ENCODE measurements at regions of chr18 and their contacts with region 1.

Region 1: GRCh38 chr18:46481048-46481846 is 175.8 kb downstream of the LOXHD1 start:
- DNase-seq: peak in 1 of 2 experiments; percentile 52
- H3K4me3 ChIP-seq: no peak overlapping the region
- H3K4me3 Mint-ChIP-seq: no peak overlapping the region
- H3K27ac Mint-ChIP-seq: no peak overlapping the region
- H3K4me1 ChIP-seq: no peaks in the 10 kb centered on the region
- H3K4me1 Mint-ChIP-seq: no peaks in the 10 kb centered on the region
- H3K27me3 ChIP-seq: no peaks in the 10 kb centered on the region
- H3K27me3 Mint-ChIP-seq: peaks cover 9% of the 10 kb centered on the region
- CTCF ChIP-seq: peak; percentile 51 to 53

Region 2: DNA sequence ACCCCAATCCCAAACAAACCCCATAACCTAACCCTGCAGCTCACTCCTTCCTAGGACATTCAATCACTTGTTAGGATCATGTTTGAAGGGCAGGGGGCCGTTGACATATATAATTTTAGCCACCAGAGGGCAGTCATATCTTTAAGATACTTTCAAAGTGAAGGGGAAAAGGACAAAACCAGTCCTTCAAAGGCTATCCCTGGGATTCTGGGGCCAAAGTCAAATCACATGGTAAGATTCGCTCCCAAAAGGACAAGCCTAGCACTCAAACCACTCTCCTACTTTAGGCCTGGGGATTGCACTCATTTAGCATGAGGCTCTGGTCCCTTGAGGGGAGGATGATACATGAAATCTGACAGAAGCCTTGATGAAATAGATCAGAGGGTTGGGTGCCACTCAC is 332.4 kb before region 1 on chr18:
- CTCF ChIA-PET with region 1: no interaction called
- POLR2A ChIA-PET with region 1: no interaction called
- intact Hi-C with region 1: loop called (anchors 5 kb)
- DNase-seq: peak; percentile 35 to 58
- H3K4me3 ChIP-seq: no peak overlapping the region
- H3K4me3 Mint-ChIP-seq: no peak overlapping the region
- H3K27ac Mint-ChIP-seq: no peak overlapping the region
- H3K4me1 ChIP-seq: no peaks in the 10 kb centered on the region
- H3K4me1 Mint-ChIP-seq: peaks cover 5% of the 10 kb centered on the region
- H3K27me3 ChIP-seq: no peaks in the 10 kb centered on the region
- H3K27me3 Mint-ChIP-seq: no peaks in the 10 kb centered on the region
- CTCF ChIP-seq: peak; percentile 28 to 33

Region 3: GRCh38 chr18:46281185-46282176 is 199.8 kb before region 1 on chr18:
- CTCF ChIA-PET with region 1: no interaction called
- POLR2A ChIA-PET with region 1: no interaction called
- intact Hi-C with region 1: loop called (anchors 1 kb)
- DNase-seq: peak; percentile 43 to 56
- H3K4me3 ChIP-seq: no peak overlapping the region
- H3K4me3 Mint-ChIP-seq: no peak overlapping the region
- H3K27ac Mint-ChIP-seq: no peak overlapping the region
- H3K4me1 ChIP-seq: no peaks in the 10 kb centered on the region
- H3K4me1 Mint-ChIP-seq: no peaks in the 10 kb centered on the region
- H3K27me3 ChIP-seq: no peaks in the 10 kb centered on the region
- H3K27me3 Mint-ChIP-seq: no peaks in the 10 kb centered on the region
- CTCF ChIP-seq: peak; percentile 65 to 74

Region 4: GRCh38 chr18:46452820-46453219 is 28.4 kb before region 1 on chr18:
- CTCF ChIA-PET with region 1: no interaction called
- POLR2A ChIA-PET with region 1: no interaction called
- intact Hi-C with region 1: no loop called
- DNase-seq: no peak
- H3K4me3 ChIP-seq: no peak overlapping the region
- H3K4me3 Mint-ChIP-seq: no peak overlapping the region
- H3K27ac Mint-ChIP-seq: no peak overlapping the region
- H3K4me1 ChIP-seq: no peaks in the 10 kb centered on the region
- H3K4me1 Mint-ChIP-seq: no peaks in the 10 kb centered on the region
- H3K27me3 ChIP-seq: no peaks in the 10 kb centered on the region
- H3K27me3 Mint-ChIP-seq: peaks cover 7% of the 10 kb centered on the region
- CTCF ChIP-seq: no peak

Measured in Caco-2 (cell line).